Naive thymus-derived CD4-positive, alpha-beta T cell (primary cell): ENCODE measurements at regions of chr15 and their contacts with region 1.

Region 1: GRCh38 chr15:60798821-60799220 is 319.9 kb upstream of the ICE2 start:
- DNase-seq: peak in 1 of 9 donors; percentile 48
- ATAC-seq: peak; percentile 36
- H3K4me3 ChIP-seq: no peak overlapping the region
- H3K4me3 Mint-ChIP-seq: peak overlapping the region in 1 of 10 donors; percentile 18
- H3K27ac ChIP-seq: no peak overlapping the region
- H3K27ac Mint-ChIP-seq: peak overlapping the region in 2 of 9 donors; percentile 20 to 36
- H3K4me1 ChIP-seq: peaks cover 36 to 37% of the 10 kb centered on the region in 2 donors
- H3K4me1 Mint-ChIP-seq: peaks cover 29 to 71% (median 50%) of the 10 kb centered on the region in 7 donors
- H3K27me3 ChIP-seq: no peaks in the 10 kb centered on the region
- H3K27me3 Mint-ChIP-seq: no peaks in the 10 kb centered on the region

Region 2: GRCh38 chr15:59711451-59712243 is 1087.2 kb before region 1 on chr15:
- CTCF ChIA-PET with region 1: no interaction called
- POLR2A ChIA-PET with region 1: no interaction called
- intact Hi-C with region 1: no loop called
- DNase-seq: no peak
- ATAC-seq: no peak
- H3K4me3 ChIP-seq: no peak overlapping the region
- H3K4me3 Mint-ChIP-seq: no peak overlapping the region
- H3K27ac ChIP-seq: no peak overlapping the region
- H3K27ac Mint-ChIP-seq: no peak overlapping the region
- H3K4me1 ChIP-seq: no peaks in the 10 kb centered on the region
- H3K4me1 Mint-ChIP-seq: no peaks in the 10 kb centered on the region
- H3K27me3 ChIP-seq: no peaks in the 10 kb centered on the region
- H3K27me3 Mint-ChIP-seq: peaks cover 0 to 23% (median 0%) of the 10 kb centered on the region in 5 donors

Region 3: GRCh38 chr15:60787837-60788691 is 10.8 kb before region 1 on chr15:
- CTCF ChIA-PET with region 1: interaction called, 3 read pairs
- POLR2A ChIA-PET with region 1: interaction called, 8 read pairs
- intact Hi-C with region 1: loop called in 1 of 2 experiments (anchors 2 kb)
- DNase-seq: peak in 3 of 9 donors; percentile 7 to 23 (median 19)
- ATAC-seq: peak; percentile 74
- H3K4me3 ChIP-seq: no peak overlapping the region
- H3K4me3 Mint-ChIP-seq: peak overlapping the region in 4 of 10 donors; percentile 2 to 43 (median 8)
- H3K27ac ChIP-seq: no peak overlapping the region
- H3K27ac Mint-ChIP-seq: peak overlapping the region in 5 of 9 donors; percentile 1 to 64 (median 5)
- H3K4me1 ChIP-seq: no peaks in the 10 kb centered on the region
- H3K4me1 Mint-ChIP-seq: peaks cover 8 to 37% (median 16%) of the 10 kb centered on the region in 7 donors
- H3K27me3 ChIP-seq: no peaks in the 10 kb centered on the region
- H3K27me3 Mint-ChIP-seq: no peaks in the 10 kb centered on the region

Region 4: GRCh38 chr15:61951949-61952348 is 1153.1 kb after region 1 on chr15:
- CTCF ChIA-PET with region 1: no interaction called
- POLR2A ChIA-PET with region 1: no interaction called
- intact Hi-C with region 1: no loop called
- DNase-seq: no peak
- ATAC-seq: no peak
- H3K4me3 ChIP-seq: no peak overlapping the region
- H3K4me3 Mint-ChIP-seq: no peak overlapping the region
- H3K27ac ChIP-seq: no peak overlapping the region
- H3K27ac Mint-ChIP-seq: peak overlapping the region in 1 of 9 donors; percentile 4
- H3K4me1 ChIP-seq: no peaks in the 10 kb centered on the region
- H3K4me1 Mint-ChIP-seq: peaks cover 0 to 3% (median 0%) of the 10 kb centered on the region in 7 donors
- H3K27me3 ChIP-seq: no peaks in the 10 kb centered on the region
- H3K27me3 Mint-ChIP-seq: no peaks in the 10 kb centered on the region